ENCODE measurements at regions of chr9 and their contacts with region 1.

Region 1: DNA sequence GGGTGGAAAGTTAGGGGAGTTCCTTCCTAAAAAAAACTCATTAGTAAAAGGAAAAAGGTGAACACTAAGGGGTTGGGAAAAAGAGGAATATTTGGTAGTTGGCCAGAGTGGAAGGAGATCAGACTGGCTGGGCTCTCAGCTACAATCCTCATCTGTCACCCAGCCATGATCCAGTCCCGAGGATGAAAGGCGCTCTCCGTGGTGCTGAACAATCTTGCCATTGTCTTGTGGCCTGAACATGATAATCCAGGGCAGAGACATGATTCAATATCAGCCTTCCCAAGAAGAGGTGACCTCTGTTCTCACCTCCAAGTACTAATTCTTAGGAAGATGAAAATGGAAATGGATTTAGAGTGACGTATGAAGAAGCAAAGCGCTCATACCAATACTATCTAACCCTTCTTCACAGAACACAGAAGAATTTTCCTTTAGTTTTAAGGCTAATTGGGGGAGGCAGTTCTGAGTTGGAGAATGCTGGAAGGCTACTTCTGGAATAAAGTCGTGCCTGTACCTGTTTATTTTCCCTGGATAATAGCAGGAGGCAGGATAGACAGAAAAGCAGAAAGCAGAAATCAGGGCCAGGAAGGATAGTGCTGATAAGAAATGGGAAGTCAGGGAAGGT is 36.6 kb upstream of the MYORG start:
- DNase-seq: peak; percentile 42
- H3K4me3 ChIP-seq: no peak overlapping the region
- H3K27ac ChIP-seq: no peak overlapping the region
- H3K4me1 ChIP-seq: no peaks in the 10 kb centered on the region
- H3K27me3 ChIP-seq: no peaks in the 10 kb centered on the region
- CTCF ChIP-seq: no peak
- POLR2A ChIP-seq: no peak

Region 2: DNA sequence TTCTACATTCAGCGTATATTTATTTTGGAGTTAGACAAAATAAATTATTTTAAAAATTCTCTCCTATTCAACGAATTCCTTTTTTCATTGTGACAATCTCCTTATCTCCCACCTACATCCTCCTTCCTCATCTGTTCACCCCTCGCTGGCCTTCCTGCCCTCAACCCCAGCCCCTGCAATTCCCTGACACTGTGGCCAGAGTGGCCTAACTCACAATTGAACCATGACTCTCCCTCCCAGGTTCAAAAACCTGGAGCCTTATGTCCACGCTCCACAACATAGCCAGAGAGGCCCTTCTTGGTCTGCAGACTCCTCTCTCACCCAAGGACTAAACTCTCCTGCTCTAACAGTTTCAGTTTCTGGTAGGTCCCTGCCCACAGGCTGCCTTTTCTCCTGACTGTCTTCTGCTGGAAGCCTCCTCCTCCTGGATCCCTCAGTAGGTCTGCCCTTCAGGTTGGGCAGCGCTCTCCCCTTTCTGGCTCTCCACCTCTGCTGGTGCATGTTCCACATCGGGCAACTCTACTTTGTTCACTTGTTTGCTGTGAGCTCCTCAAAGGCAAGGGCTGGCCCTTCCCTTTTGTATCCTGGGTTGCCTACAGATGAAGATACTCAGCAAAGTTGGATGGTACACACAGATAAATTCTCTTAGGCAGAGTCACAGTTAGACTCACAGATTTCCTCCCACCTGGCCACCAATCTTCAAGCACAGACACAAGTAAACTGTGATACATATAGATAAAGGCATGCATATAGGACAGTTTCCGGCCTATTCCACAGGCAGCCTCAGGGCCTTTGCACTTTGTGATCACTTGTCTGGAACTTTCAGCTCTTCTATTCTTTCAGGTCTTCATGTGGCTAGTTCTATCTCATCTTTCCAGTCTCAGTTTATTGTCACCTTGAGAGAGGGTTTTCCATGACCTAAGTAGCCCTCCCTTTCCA is 16.8 kb before region 1 on chr9:
- CTCF ChIA-PET with region 1: no interaction called
- POLR2A ChIA-PET with region 1: no interaction called
- dilution Hi-C with region 1: no loop called
- intact Hi-C with region 1: no loop called
- DNase-seq: no peak
- H3K4me3 ChIP-seq: no peak overlapping the region
- H3K27ac ChIP-seq: no peak overlapping the region
- H3K4me1 ChIP-seq: no peaks in the 10 kb centered on the region
- H3K27me3 ChIP-seq: no peaks in the 10 kb centered on the region
- CTCF ChIP-seq: no peak
- POLR2A ChIP-seq: no peak

Region 3: DNA sequence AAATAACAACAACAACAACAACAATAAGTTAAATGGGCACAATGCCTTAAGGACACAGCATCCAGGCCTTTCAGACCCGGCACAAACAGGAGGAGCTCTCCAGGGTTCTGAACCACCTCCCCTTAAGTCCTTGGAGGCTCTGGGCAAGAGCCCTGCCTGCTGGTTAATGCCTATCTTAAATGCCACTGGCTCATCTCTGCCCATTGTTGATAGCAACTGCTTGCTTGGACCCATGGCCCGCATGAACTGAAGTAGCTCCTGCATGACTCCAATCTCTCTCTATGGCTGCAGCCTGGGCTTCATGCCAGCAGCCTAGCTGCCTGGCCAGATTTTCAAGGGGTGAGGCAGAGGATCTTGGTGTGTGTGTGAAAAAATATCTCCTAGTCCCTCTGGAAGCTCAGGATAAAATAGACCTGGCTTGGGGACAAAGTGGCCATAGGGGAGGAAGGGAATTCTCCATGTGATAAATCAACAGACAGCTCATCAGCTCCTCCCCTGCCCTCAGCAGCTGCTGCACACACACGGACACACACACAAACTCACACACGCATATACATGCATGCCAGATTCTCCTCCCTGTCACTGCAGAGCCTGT is 17.6 kb after region 1 on chr9:
- CTCF ChIA-PET with region 1: interaction called, 6 read pairs
- POLR2A ChIA-PET with region 1: interaction called, 4 read pairs
- dilution Hi-C with region 1: no loop called
- intact Hi-C with region 1: loop called (anchors 1 kb)
- DNase-seq: peak; percentile 64
- H3K4me3 ChIP-seq: no peak overlapping the region
- H3K27ac ChIP-seq: no peak overlapping the region
- H3K4me1 ChIP-seq: peaks cover 15% of the 10 kb centered on the region
- H3K27me3 ChIP-seq: no peaks in the 10 kb centered on the region
- CTCF ChIP-seq: no peak
- POLR2A ChIP-seq: no peak